GM10248 (cell line): ENCODE measurements at regions of chr11 and their contacts with region 1.

Region 1: GRCh38 chr11:125685228-125685627 is 4.6 kb upstream of the ACRV1 start:
- DNase-seq: no peak
- CTCF ChIP-seq: no peak

Region 2: DNA sequence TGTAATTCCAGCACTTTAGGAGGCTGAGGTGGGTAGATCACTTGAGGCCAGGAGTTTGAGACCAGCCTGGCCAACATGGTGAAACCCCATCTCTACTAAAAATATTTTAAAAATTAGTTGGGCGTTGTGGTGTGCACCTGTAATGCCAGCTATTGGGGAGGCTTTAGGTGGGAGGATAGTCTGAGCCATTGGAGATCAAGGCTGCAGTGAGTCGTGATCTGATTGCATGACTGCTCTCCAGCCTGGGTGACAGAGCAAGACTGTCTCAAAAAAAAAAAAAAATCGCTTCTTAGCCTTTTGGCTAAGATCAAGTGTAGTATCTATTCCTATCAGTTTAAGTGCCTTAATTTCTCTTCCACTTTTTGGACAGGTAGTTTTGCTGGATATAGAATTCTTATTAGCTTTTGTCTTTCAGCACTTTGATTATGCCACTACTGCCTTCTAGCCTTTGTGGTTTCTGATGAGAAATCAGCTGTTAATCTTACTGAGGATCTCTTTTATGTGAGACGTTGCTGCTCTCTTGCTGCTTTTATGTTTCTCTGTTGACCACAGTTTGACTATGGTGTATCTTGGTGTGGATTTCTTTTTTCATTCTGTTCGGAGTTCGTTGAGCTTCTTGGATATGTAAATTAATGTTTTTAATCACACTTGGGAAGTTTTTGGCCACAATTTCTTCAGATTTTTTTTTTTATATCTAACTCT is 35.6 kb before region 1 on chr11:
- CTCF ChIA-PET with region 1: no interaction called
- POLR2A ChIA-PET with region 1: no interaction called
- DNase-seq: no peak
- CTCF ChIP-seq: no peak

Region 3: GRCh38 chr11:125662689-125663088 is 22.5 kb before region 1 on chr11:
- CTCF ChIA-PET with region 1: no interaction called
- POLR2A ChIA-PET with region 1: no interaction called
- DNase-seq: no peak
- CTCF ChIP-seq: no peak

Region 4: DNA sequence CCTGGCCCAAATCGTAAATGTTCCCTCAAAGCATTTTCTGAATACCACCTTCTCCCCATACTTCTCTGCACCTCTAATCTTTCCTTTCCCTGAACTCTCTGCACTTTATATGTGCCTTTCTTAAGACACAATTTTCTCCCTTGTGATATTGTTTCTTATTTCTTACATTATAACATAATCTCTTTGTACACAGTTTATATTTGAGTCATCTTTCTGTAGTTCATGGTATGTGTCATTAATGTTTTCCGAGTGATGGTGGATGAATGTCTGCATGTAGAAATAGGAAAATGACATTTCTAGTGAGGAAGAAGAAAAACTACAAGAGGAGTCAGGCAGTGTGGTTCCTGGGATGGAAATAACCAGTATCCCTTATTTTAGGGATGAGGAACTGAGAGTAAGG is 10.0 kb before region 1 on chr11:
- CTCF ChIA-PET with region 1: interaction called, 10 read pairs
- POLR2A ChIA-PET with region 1: no interaction called
- DNase-seq: no peak
- CTCF ChIP-seq: no peak